HEK293 (cell line): ENCODE measurements at regions of chr15 and their contacts with region 1.

Region 1: GRCh38 chr15:70488002-70488605 is 275.3 kb downstream of the UACA start:
- H3K4me3 ChIP-seq: no peak overlapping the region
- H3K27ac ChIP-seq: no peak overlapping the region
- H3K4me1 ChIP-seq: peaks cover 17% of the 10 kb centered on the region
- CTCF ChIP-seq: peak; percentile 88

Region 2: GRCh38 chr15:69475769-69476358 is 1012.2 kb before region 1 on chr15:
- CTCF ChIA-PET with region 1: interaction called, 29 read pairs
- POLR2A ChIA-PET with region 1: no interaction called
- H3K4me3 ChIP-seq: no peak overlapping the region
- H3K27ac ChIP-seq: no peak overlapping the region
- H3K4me1 ChIP-seq: no peaks in the 10 kb centered on the region
- CTCF ChIP-seq: peak; percentile 80

Region 3: GRCh38 chr15:70395164-70395563 is 92.9 kb before region 1 on chr15:
- CTCF ChIA-PET with region 1: no interaction called
- POLR2A ChIA-PET with region 1: no interaction called
- H3K4me3 ChIP-seq: no peak overlapping the region
- H3K27ac ChIP-seq: no peak overlapping the region
- H3K4me1 ChIP-seq: no peaks in the 10 kb centered on the region
- CTCF ChIP-seq: no peak

Region 4: DNA sequence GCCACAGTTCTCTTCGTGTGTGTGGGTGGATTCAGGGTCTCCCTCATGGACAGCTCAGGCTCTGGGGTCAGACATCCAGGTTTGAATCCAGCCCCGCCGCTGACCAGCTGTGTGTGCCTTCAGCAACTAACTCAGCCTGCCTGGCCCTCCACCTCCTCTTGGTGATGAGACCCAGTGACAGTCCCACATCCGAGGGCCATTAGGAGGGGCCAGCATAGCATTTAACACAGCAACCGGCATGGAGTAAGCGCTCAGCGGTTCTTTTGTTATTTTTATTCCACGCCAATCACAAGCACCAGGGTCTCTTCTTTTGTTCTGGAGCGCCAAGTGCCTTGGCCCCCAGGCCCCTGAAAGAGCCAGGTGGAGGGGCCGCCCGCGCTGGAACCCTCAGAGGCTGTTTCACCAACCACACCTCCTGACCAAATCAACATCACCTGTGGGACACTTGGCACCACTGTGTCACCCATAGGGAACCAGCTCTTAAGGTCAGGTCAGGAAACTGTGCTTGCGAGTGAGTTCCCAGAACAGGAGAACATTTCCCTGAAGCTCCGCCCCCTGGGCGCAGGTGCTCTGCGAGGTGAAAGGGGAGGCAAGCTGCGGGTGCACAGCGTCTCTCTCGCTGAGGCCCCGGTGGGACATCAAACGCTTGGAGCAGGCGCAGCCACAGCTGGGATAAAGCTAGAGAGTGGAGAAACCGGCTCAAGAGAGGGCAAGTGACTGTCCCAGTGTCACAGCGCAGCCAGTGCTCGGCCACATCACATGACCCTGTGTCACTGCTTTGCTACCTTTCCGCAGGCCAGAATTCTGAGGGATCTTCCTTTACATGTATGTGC is 36.1 kb before region 1 on chr15:
- CTCF ChIA-PET with region 1: interaction called, 18 read pairs
- POLR2A ChIA-PET with region 1: no interaction called
- H3K4me3 ChIP-seq: no peak overlapping the region
- H3K27ac ChIP-seq: no peak overlapping the region
- H3K4me1 ChIP-seq: peaks cover 6% of the 10 kb centered on the region; the same call in 1 of the 2 replicates
- CTCF ChIP-seq: no peak

Region 5: GRCh38 chr15:70474471-70475396 is 13.4 kb before region 1 on chr15:
- CTCF ChIA-PET with region 1: interaction called, 26 read pairs
- POLR2A ChIA-PET with region 1: interaction called, 3 read pairs
- H3K4me3 ChIP-seq: no peak overlapping the region
- H3K27ac ChIP-seq: peak overlapping the region; percentile 40; the same call in 1 of the 2 replicates
- H3K4me1 ChIP-seq: peaks cover 14% of the 10 kb centered on the region
- CTCF ChIP-seq: no peak

Region 6: GRCh38 chr15:70512772-70513362 is 24.8 kb after region 1 on chr15:
- CTCF ChIA-PET with region 1: interaction called, 181 read pairs
- POLR2A ChIA-PET with region 1: interaction called, 4 read pairs
- H3K4me3 ChIP-seq: no peak overlapping the region
- H3K27ac ChIP-seq: no peak overlapping the region
- H3K4me1 ChIP-seq: peaks cover 9% of the 10 kb centered on the region; the same call in 1 of the 2 replicates
- CTCF ChIP-seq: peak; percentile 73

Region 7: GRCh38 chr15:70584838-70585706 is 97.0 kb after region 1 on chr15:
- CTCF ChIA-PET with region 1: interaction called, 11 read pairs
- POLR2A ChIA-PET with region 1: interaction called, 4 read pairs
- H3K4me3 ChIP-seq: peak overlapping the region; percentile 43
- H3K27ac ChIP-seq: peak overlapping the region; percentile 77
- H3K4me1 ChIP-seq: peaks cover 16% of the 10 kb centered on the region; the same call in 1 of the 2 replicates
- CTCF ChIP-seq: peak; percentile 81